ENCODE measurements at regions of chr5 and their contacts with region 1.

Region 1: GRCh38 chr5:56270568-56271392 is 37.6 kb upstream of the ANKRD55 start:
- DNase-seq: peak; percentile 81
- H3K4me3 ChIP-seq: no peak overlapping the region
- H3K27ac ChIP-seq: no peak overlapping the region
- H3K27me3 ChIP-seq: no peaks in the 10 kb centered on the region
- CTCF ChIP-seq: peak; percentile 99

Region 2: GRCh38 chr5:56833325-56833724 is 562.5 kb after region 1 on chr5:
- CTCF ChIA-PET with region 1: interaction called, 175 read pairs
- POLR2A ChIA-PET with region 1: interaction called, 13 read pairs
- DNase-seq: no peak
- H3K4me3 ChIP-seq: no peak overlapping the region
- H3K27ac ChIP-seq: no peak overlapping the region
- H3K27me3 ChIP-seq: no peaks in the 10 kb centered on the region
- CTCF ChIP-seq: no peak

Region 3: DNA sequence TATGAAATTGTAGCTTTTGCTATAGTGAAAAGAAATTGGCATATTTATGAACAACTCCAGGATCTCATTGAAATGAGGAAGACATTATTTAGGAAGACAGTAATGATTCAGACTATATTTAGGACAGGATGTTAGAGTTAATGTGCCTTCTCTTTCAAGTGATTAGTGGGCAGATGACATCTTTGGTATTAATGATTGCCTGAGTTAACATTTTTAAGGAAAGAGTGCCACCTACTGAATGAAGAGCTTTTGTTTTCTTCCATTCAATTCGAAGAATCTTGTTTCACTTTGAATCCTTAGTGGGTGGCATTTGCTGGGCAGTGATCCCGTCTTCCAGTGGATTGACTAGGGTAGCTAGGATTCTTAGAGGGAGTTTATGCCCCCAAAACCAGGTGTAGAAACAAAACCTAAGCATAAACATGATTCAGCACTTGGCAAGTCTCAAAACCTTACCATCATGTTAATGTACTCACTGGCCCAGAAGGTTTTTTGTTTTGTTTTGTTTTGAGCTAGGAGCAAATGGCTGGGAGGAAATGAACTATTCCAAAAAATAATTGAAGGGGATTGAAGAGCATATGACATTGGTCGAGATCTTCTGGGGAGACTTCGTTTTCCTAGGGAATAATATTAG is 567.7 kb after region 1 on chr5:
- CTCF ChIA-PET with region 1: interaction called, 175 read pairs
- POLR2A ChIA-PET with region 1: interaction called, 13 read pairs
- DNase-seq: peak; percentile 26
- H3K4me3 ChIP-seq: peak overlapping the region; percentile 36
- H3K27ac ChIP-seq: no peak overlapping the region
- H3K27me3 ChIP-seq: no peaks in the 10 kb centered on the region
- CTCF ChIP-seq: peak; percentile 51

Region 4: GRCh38 chr5:56856541-56857178 is 585.9 kb after region 1 on chr5:
- CTCF ChIA-PET with region 1: interaction called, 24 read pairs
- POLR2A ChIA-PET with region 1: no interaction called
- DNase-seq: no peak
- H3K4me3 ChIP-seq: no peak overlapping the region
- H3K27ac ChIP-seq: no peak overlapping the region
- H3K27me3 ChIP-seq: no peaks in the 10 kb centered on the region
- CTCF ChIP-seq: no peak

Region 5: GRCh38 chr5:56900858-56901578 is 630.2 kb after region 1 on chr5:
- CTCF ChIA-PET with region 1: interaction called, 13 read pairs
- POLR2A ChIA-PET with region 1: no interaction called
- DNase-seq: no peak
- H3K4me3 ChIP-seq: no peak overlapping the region
- H3K27ac ChIP-seq: no peak overlapping the region
- H3K27me3 ChIP-seq: no peaks in the 10 kb centered on the region
- CTCF ChIP-seq: peak; percentile 64